ENCODE measurements at regions of chr10 and their contacts with region 1.

Region 1: GRCh38 chr10:69506834-69507721 is 55.8 kb downstream of the TSPAN15 start:
- DNase-seq: peak in 1 of 5 donors; percentile 62
- H3K4me3 ChIP-seq: peak overlapping the region in 1 of 2 donors; percentile 51
- H3K4me3 Mint-ChIP-seq: peak overlapping the region; percentile 68 to 86 (median 78)
- H3K27ac ChIP-seq: peak overlapping the region; percentile 39
- H3K27ac Mint-ChIP-seq: peak overlapping the region; percentile 84 to 98 (median 92)
- H3K4me1 ChIP-seq: peaks cover 20% of the 10 kb centered on the region
- H3K4me1 Mint-ChIP-seq: peaks cover 9 to 20% (median 14%) of the 10 kb centered on the region in 4 donors
- H3K27me3 ChIP-seq: no peaks in the 10 kb centered on the region
- H3K27me3 Mint-ChIP-seq: no peaks in the 10 kb centered on the region

Region 2: DNA sequence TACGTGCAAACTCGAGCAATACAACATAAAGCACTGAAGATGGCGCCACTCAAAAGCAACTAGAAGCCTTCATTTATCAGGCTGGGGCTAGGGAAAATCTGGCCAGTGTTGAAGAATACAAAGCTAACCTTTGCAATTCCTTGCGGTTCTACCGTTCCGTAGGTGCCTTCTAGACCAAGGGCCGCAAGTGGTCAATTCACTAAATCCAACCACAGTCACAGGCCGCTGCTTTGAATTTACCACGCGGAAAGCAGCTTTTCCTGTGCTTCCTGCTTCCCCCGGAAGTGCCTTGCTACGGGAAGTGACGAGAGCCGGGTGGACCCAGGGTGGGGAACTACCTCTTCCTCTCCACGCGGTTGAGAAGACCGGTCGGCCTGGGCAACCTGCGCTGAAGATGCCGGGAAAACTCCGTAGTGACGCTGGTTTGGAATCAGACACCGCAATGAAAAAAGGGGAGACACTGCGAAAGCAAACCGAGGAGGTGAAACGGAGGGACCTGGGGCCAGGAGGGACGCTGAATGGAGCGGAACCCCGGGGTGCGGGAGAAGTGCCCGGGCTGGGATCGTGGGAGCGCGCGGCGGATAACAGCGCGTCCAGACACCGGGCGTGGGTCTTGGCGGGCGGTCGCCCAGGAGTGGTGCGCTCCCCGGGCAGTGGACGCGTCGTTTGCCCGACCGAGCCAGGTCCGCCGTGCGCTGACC is 551.1 kb before region 1 on chr10 and contains the start of gene DDX21:
- CTCF ChIA-PET with region 1: no interaction called
- POLR2A ChIA-PET with region 1: no interaction called
- intact Hi-C with region 1: loop called (anchors 5 kb)
- DNase-seq: peak; percentile 87 to 96 (median 90)
- H3K4me3 ChIP-seq: peak within 1 kb of the TSS; percentile 64 to 97
- H3K4me3 Mint-ChIP-seq: peak within 1 kb of the TSS; percentile 97 to 100 (median 100)
- H3K27ac ChIP-seq: peak within 1 kb of the TSS; percentile 100
- H3K27ac Mint-ChIP-seq: peak within 1 kb of the TSS; percentile 98 to 100 (median 100)
- H3K4me1 ChIP-seq: peaks cover 46% of the 10 kb centered on the region
- H3K4me1 Mint-ChIP-seq: peaks cover 16 to 47% (median 35%) of the 10 kb centered on the region in 4 donors
- H3K27me3 ChIP-seq: no peaks in the 10 kb centered on the region
- H3K27me3 Mint-ChIP-seq: no peaks in the 10 kb centered on the region
- total RNA-seq, gene DDX21: 50.6 to 57.1 TPM

Region 3: GRCh38 chr10:69237528-69238159 is 269.4 kb before region 1 on chr10:
- CTCF ChIA-PET with region 1: interaction called, 14 read pairs
- POLR2A ChIA-PET with region 1: no interaction called
- intact Hi-C with region 1: loop called (anchors 1 kb)
- DNase-seq: peak; percentile 78 to 82 (median 79)
- H3K4me3 ChIP-seq: no peak overlapping the region
- H3K4me3 Mint-ChIP-seq: peak overlapping the region in 2 of 8 donors; percentile 7 to 48
- H3K27ac ChIP-seq: no peak overlapping the region
- H3K27ac Mint-ChIP-seq: peak overlapping the region in 3 of 7 donors; percentile 11 to 63 (median 17)
- H3K4me1 ChIP-seq: peaks cover 17% of the 10 kb centered on the region
- H3K4me1 Mint-ChIP-seq: peaks cover 14 to 27% (median 17%) of the 10 kb centered on the region in 4 donors
- H3K27me3 ChIP-seq: no peaks in the 10 kb centered on the region
- H3K27me3 Mint-ChIP-seq: no peaks in the 10 kb centered on the region

Region 4: DNA sequence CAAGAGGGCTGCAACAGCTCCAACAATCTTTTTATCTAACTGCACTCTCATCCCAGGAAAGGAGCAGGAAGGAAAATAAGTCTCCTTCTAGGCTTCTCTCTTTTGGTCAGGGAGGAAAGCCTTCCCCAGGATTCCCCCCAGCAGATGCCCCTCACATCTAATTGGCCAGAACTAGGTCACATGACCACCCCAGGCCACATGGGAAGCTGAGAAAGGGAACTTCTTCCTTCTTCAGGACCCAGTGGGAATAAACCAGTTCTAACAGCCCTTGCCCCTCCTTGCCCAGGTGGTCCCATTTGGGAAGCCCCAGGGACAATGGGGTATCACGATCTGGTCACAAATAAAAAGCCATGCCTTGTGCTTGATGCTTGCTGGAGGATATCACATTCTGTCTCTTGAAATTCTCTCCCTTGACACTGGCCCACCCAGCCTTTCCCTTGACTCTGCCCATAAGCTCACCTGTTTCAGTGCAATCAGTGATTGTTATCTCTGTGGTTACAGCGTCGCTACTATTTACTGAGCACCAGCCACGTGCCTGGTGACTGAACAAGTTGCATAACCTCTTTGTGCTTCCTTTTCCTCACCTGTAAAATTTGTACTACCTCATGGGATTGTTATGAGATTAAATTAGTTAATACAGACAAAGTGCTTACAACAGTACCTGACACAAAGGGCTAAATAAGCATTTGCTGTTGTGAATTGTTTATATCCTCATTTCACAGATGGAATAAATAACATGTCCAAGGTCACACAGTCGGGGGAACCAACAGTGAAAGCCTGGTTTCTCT is 81.4 kb before region 1 on chr10:
- CTCF ChIA-PET with region 1: interaction called, 17 read pairs
- POLR2A ChIA-PET with region 1: interaction called, 8 read pairs
- intact Hi-C with region 1: loop called (anchors 1 kb)
- DNase-seq: peak; percentile 73 to 86 (median 82)
- H3K4me3 ChIP-seq: no peak overlapping the region
- H3K4me3 Mint-ChIP-seq: peak overlapping the region in 7 of 8 donors; percentile 2 to 72 (median 47)
- H3K27ac ChIP-seq: peak overlapping the region; percentile 61
- H3K27ac Mint-ChIP-seq: peak overlapping the region; percentile 81 to 95 (median 90)
- H3K4me1 ChIP-seq: peaks cover 56% of the 10 kb centered on the region
- H3K4me1 Mint-ChIP-seq: peaks cover 46 to 71% (median 55%) of the 10 kb centered on the region in 4 donors
- H3K27me3 ChIP-seq: no peaks in the 10 kb centered on the region
- H3K27me3 Mint-ChIP-seq: no peaks in the 10 kb centered on the region

Region 5: GRCh38 chr10:69451209-69451783 is 55.8 kb before region 1 on chr10 and contains the start of gene TSPAN15:
- CTCF ChIA-PET with region 1: interaction called, 5 read pairs
- POLR2A ChIA-PET with region 1: interaction called, 7 read pairs
- intact Hi-C with region 1: loop called (anchors 1 kb)
- DNase-seq: peak; percentile 80 to 83 (median 82)
- H3K4me3 ChIP-seq: peak within 1 kb of the TSS in 1 of 2 donors; percentile 73
- H3K4me3 Mint-ChIP-seq: peak within 1 kb of the TSS; percentile 86 to 95 (median 90)
- H3K27ac ChIP-seq: peak within 1 kb of the TSS; percentile 49
- H3K27ac Mint-ChIP-seq: peak within 1 kb of the TSS; percentile 39 to 89 (median 70)
- H3K4me1 ChIP-seq: peaks cover 26% of the 10 kb centered on the region
- H3K4me1 Mint-ChIP-seq: peaks cover 12 to 35% (median 22%) of the 10 kb centered on the region in 4 donors
- H3K27me3 ChIP-seq: no peaks in the 10 kb centered on the region
- H3K27me3 Mint-ChIP-seq: no peaks in the 10 kb centered on the region
- total RNA-seq, gene TSPAN15: 2.4 to 2.8 TPM

Region 6: GRCh38 chr10:69468751-69469089 is 38.4 kb before region 1 on chr10:
- CTCF ChIA-PET with region 1: no interaction called
- POLR2A ChIA-PET with region 1: no interaction called
- intact Hi-C with region 1: no loop called
- DNase-seq: no peak
- H3K4me3 ChIP-seq: no peak overlapping the region
- H3K4me3 Mint-ChIP-seq: peak overlapping the region in 1 of 8 donors; percentile 3
- H3K27ac ChIP-seq: no peak overlapping the region
- H3K27ac Mint-ChIP-seq: peak overlapping the region in 4 of 7 donors; percentile 9 to 75 (median 58)
- H3K4me1 ChIP-seq: peaks cover 34% of the 10 kb centered on the region
- H3K4me1 Mint-ChIP-seq: peaks cover 11 to 47% (median 24%) of the 10 kb centered on the region in 4 donors
- H3K27me3 ChIP-seq: no peaks in the 10 kb centered on the region
- H3K27me3 Mint-ChIP-seq: peaks cover 0 to 2% of the 10 kb centered on the region in 2 donors

Region 7: DNA sequence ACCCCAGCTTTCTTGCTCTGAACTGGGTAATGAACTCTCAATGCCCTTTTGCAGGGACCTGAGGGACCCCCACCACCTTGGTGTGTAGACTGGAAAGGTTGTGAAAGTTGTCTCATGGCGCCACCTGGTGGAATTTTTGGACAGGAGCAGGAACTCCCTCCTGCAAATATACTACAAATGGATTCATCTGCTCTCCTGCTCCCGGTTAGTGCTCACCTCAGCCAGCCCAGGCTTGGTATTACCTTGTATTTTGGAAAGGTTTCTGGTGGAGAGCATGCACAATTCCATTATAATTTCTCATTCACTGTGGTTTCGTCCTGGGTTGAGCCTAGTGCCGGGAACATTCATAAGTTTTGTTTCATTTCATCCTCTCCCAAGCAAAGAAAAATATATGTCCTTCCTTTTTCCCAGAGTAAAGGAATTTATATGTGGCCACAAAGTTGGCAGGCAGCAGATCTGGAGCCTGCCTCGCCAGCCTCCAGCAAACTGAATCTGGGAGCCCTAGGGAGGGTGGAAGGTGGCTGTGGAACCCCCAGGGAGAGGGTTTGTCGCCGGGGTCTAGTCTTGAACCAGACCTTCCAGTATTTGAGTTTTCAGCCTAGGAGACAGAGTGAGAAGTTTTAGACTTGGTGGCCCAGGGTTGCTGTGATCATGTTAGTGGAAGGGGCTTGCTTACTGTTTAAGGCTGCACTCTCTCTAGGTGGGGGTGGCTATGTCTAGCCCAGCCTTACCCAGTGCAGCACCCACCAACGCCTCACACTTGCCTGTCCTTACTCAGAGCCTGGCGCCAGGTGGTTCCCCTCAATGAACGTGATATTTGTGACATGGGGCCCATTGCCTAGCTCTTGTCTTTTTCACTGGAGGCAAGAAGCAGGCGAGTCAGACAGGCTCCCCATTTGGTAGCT is 132.5 kb after region 1 on chr10:
- CTCF ChIA-PET with region 1: interaction called, 338 read pairs
- POLR2A ChIA-PET with region 1: no interaction called
- intact Hi-C with region 1: no loop called
- DNase-seq: peak; percentile 67 to 73 (median 69)
- H3K4me3 ChIP-seq: no peak overlapping the region
- H3K4me3 Mint-ChIP-seq: no peak overlapping the region
- H3K27ac ChIP-seq: no peak overlapping the region
- H3K27ac Mint-ChIP-seq: peak overlapping the region in 1 of 7 donors; percentile 27
- H3K4me1 ChIP-seq: no peaks in the 10 kb centered on the region
- H3K4me1 Mint-ChIP-seq: peaks cover 0 to 4% (median 3%) of the 10 kb centered on the region in 4 donors
- H3K27me3 ChIP-seq: no peaks in the 10 kb centered on the region
- H3K27me3 Mint-ChIP-seq: peaks cover 0 to 2% of the 10 kb centered on the region in 2 donors

Measured in CD4-positive, alpha-beta memory T cell (primary cell).